ENCODE measurements at regions of chr22 and their contacts with region 1.

Region 1: GRCh38 chr22:31661851-31662656 is at the start of gene PISD:
- DNase-seq: peak; percentile 94 to 98 (median 97)
- ATAC-seq: peak; percentile 94
- H3K4me3 ChIP-seq: peak within 1 kb of the TSS; percentile 89 to 97
- H3K4me3 Mint-ChIP-seq: peak within 1 kb of the TSS; percentile 96
- H3K27ac ChIP-seq: peak within 1 kb of the TSS; percentile 73 to 79
- H3K27ac Mint-ChIP-seq: peak within 1 kb of the TSS; percentile 96
- H3K4me1 ChIP-seq: peaks cover 18% of the 10 kb centered on the region
- H3K4me1 Mint-ChIP-seq: peaks cover 41% of the 10 kb centered on the region
- H3K27me3 ChIP-seq: no peaks in the 10 kb centered on the region
- H3K27me3 Mint-ChIP-seq: no peaks in the 10 kb centered on the region
- CTCF ChIP-seq: no peak
- total RNA-seq, gene PISD: 41.2 to 43.6 TPM

Region 2: GRCh38 chr22:30591588-30592359 is 1070.3 kb before region 1 on chr22 and contains the start of gene PES1:
- CTCF ChIA-PET with region 1: no interaction called
- POLR2A ChIA-PET with region 1: no interaction called
- intact Hi-C with region 1: loop called in 1 of 2 experiments (anchors 5 kb)
- DNase-seq: peak; percentile 90 to 99 (median 95)
- ATAC-seq: peak; percentile 96
- H3K4me3 ChIP-seq: peak within 1 kb of the TSS; percentile 79 to 80
- H3K4me3 Mint-ChIP-seq: no peak within 1 kb of the TSS
- H3K27ac ChIP-seq: peak within 1 kb of the TSS; percentile 89 to 97
- H3K27ac Mint-ChIP-seq: no peak within 1 kb of the TSS
- H3K4me1 ChIP-seq: peaks cover 15% of the 10 kb centered on the region
- H3K4me1 Mint-ChIP-seq: no peaks in the 10 kb centered on the region
- H3K27me3 ChIP-seq: no peaks in the 10 kb centered on the region
- H3K27me3 Mint-ChIP-seq: peaks cover 13% of the 10 kb centered on the region
- CTCF ChIP-seq: no peak
- total RNA-seq, gene PES1: 39.7 to 47.0 TPM

Region 3: DNA sequence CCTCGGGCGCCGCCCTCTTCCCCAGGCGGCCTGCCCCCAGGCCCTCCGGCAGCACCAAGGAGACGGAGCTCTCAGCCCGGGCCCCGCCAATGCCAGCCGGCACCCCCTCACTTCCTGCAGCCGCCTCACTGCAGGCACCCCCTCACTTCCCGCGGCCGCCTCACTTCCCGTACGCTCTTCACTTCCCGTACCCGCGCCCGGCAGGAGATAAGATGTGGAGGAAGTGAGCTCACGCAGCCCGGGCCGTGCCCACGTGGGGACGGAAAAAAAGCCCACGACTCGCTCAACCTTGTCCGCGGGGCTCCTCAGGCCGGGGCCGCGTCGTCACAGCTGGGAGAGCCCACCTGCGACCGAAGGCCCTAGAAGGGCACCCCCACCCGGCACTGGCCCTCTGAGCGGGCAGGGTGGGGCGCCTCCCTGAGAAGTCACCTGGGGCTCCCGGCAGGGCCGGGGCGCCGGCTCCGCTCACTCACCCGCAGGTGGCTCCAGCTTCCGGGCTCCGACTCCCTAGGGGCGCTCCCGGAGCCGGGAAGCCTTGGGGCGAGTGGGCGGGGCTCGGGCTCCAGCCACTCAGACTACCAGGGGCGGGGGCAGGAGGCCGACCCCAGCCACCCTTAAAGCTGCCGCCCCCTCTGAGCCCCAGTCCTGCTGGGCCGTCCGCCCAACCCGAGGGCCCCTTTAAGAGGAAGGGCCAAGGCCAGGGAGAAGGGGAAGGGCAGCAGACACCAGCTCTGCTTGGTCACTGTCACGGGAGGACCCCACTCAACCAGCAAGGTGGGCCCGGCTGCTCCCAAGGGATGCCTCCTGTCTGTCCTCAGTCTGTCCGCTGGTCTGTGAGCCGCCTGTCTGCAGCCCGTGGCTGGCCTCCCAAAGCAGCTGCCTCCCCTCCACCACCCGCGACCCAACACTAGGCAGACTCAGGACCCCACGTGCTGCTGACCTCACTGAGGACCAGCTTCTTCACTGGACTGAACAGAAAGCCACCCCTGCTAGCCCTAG is 31.4 kb before region 1 on chr22:
- CTCF ChIA-PET with region 1: interaction called, 22 read pairs
- POLR2A ChIA-PET with region 1: interaction called, 16 read pairs
- intact Hi-C with region 1: loop called (anchors 1 kb)
- DNase-seq: peak; percentile 69 to 94 (median 87)
- ATAC-seq: peak; percentile 92
- H3K4me3 ChIP-seq: peak overlapping the region; percentile 77 to 79
- H3K4me3 Mint-ChIP-seq: peak overlapping the region; percentile 90
- H3K27ac ChIP-seq: peak overlapping the region; percentile 85 to 98
- H3K27ac Mint-ChIP-seq: peak overlapping the region; percentile 94
- H3K4me1 ChIP-seq: peaks cover 40% of the 10 kb centered on the region
- H3K4me1 Mint-ChIP-seq: peaks cover 51% of the 10 kb centered on the region
- H3K27me3 ChIP-seq: no peaks in the 10 kb centered on the region
- H3K27me3 Mint-ChIP-seq: no peaks in the 10 kb centered on the region
- CTCF ChIP-seq: no peak

Region 4: GRCh38 chr22:31692186-31692886 is 30.3 kb after region 1 on chr22:
- CTCF ChIA-PET with region 1: interaction called, 5 read pairs
- POLR2A ChIA-PET with region 1: interaction called, 4 read pairs
- intact Hi-C with region 1: loop called in 1 of 2 experiments (anchors 1 kb)
- DNase-seq: peak in 3 of 9 experiments; percentile 9 to 64 (median 44)
- ATAC-seq: peak; percentile 73
- H3K4me3 ChIP-seq: no peak overlapping the region
- H3K4me3 Mint-ChIP-seq: no peak overlapping the region
- H3K27ac ChIP-seq: peak overlapping the region in 1 of 2 experiments; percentile 58
- H3K27ac Mint-ChIP-seq: peak overlapping the region; percentile 56
- H3K4me1 ChIP-seq: no peaks in the 10 kb centered on the region
- H3K4me1 Mint-ChIP-seq: peaks cover 12% of the 10 kb centered on the region
- H3K27me3 ChIP-seq: no peaks in the 10 kb centered on the region
- H3K27me3 Mint-ChIP-seq: no peaks in the 10 kb centered on the region
- CTCF ChIP-seq: no peak

Region 5: GRCh38 chr22:31954535-31955523 is 292.8 kb after region 1 on chr22:
- CTCF ChIA-PET with region 1: interaction called, 15 read pairs
- POLR2A ChIA-PET with region 1: interaction called, 3 read pairs
- intact Hi-C with region 1: no loop called
- DNase-seq: no peak
- ATAC-seq: no peak
- H3K4me3 ChIP-seq: no peak overlapping the region
- H3K4me3 Mint-ChIP-seq: no peak overlapping the region
- H3K27ac ChIP-seq: peak overlapping the region in 1 of 2 experiments; percentile 47
- H3K27ac Mint-ChIP-seq: peak overlapping the region; percentile 65
- H3K4me1 ChIP-seq: peaks cover 34% of the 10 kb centered on the region
- H3K4me1 Mint-ChIP-seq: peaks cover 75% of the 10 kb centered on the region
- H3K27me3 ChIP-seq: no peaks in the 10 kb centered on the region
- H3K27me3 Mint-ChIP-seq: no peaks in the 10 kb centered on the region
- CTCF ChIP-seq: no peak

Region 6: DNA sequence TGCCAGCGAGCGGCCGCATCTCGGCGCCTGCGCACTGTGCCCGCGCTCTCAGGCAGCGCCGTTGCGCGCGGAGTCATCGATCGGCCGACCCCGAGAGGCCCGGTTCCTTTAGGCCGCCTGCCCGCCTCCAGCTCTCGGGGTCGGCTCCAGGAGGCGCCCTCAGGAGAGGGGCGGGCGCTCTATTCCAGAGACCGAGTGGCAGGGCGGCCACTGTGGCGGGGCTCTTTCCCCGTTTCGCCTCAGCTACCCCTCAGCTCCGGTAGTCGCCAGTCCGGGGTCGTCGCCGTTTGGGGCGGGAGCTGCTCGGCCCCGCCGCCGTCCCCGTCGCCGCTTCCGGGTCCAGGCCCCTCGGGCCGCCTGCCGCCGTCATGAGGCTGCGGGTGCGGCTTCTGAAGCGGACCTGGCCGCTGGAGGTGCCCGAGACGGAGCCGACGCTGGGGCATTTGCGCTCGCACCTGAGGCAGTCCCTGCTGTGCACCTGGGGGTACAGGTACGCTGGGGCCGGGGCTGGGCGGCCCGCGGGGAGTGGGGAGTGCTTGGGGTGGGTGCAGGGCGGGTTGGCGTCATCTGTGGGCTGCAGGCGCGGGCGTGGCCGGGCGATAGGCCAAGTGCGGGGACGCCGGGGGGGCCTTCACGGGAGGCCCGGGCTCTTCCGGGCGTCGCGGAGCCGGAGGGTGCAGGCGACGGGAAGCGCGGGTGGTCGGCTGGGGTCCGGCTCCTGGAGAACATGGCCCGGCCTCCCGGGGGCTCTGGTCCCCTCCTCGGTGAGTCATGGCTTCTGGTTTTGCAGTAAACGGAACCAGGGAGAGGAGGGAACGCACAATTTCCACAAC is 812.8 kb after region 1 on chr22 and contains the start of gene FBXO7:
- CTCF ChIA-PET with region 1: no interaction called
- POLR2A ChIA-PET with region 1: no interaction called
- intact Hi-C with region 1: loop called in 1 of 2 experiments (anchors 10 kb)
- DNase-seq: peak; percentile 70 to 95 (median 86)
- ATAC-seq: peak; percentile 86
- H3K4me3 ChIP-seq: peak within 1 kb of the TSS; percentile 83 to 91
- H3K4me3 Mint-ChIP-seq: peak within 1 kb of the TSS; percentile 90
- H3K27ac ChIP-seq: peak within 1 kb of the TSS; percentile 90 to 92
- H3K27ac Mint-ChIP-seq: peak within 1 kb of the TSS; percentile 96
- H3K4me1 ChIP-seq: peaks cover 39% of the 10 kb centered on the region
- H3K4me1 Mint-ChIP-seq: peaks cover 24% of the 10 kb centered on the region
- H3K27me3 ChIP-seq: no peaks in the 10 kb centered on the region
- H3K27me3 Mint-ChIP-seq: no peaks in the 10 kb centered on the region
- CTCF ChIP-seq: peak; percentile 23
- total RNA-seq, gene FBXO7: 172 to 174 TPM

Measured in CD8-positive, alpha-beta T cell (primary cell).